ENCODE measurements at regions of chr15 and their contacts with region 1.

Region 1: GRCh38 chr15:78761891-78762385 is 49.3 kb downstream of the ADAMTS7 start:
- DNase-seq: no peak
- H3K4me3 Mint-ChIP-seq: no peak overlapping the region
- H3K27ac Mint-ChIP-seq: peak overlapping the region; percentile 86
- H3K4me1 Mint-ChIP-seq: peaks cover 22% of the 10 kb centered on the region
- H3K27me3 Mint-ChIP-seq: no peaks in the 10 kb centered on the region

Region 2: DNA sequence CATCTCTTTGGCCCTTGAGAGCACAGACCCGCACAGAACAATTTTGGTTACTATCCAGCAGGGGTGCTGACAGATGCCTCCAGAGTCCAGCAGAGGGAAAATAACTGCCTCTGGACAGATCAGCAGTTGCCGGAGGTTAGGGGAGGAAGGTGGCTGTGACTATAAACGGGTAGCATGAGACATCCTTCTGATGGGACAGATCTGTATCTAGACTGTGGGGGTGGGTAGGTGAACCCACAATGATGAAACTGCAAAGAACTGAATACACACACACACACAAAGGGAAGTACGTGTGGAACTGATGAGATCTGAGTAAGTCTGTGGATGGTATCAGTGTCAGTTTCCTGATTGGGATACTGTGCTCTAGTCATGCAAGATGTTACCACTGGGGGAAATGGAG is 28.1 kb after region 1 on chr15:
- intact Hi-C with region 1: loop called (anchors 1 kb)
- DNase-seq: peak; percentile 37
- H3K4me3 Mint-ChIP-seq: no peak overlapping the region
- H3K27ac Mint-ChIP-seq: peak overlapping the region; percentile 44
- H3K4me1 Mint-ChIP-seq: peaks cover 23% of the 10 kb centered on the region
- H3K27me3 Mint-ChIP-seq: no peaks in the 10 kb centered on the region

Region 3: DNA sequence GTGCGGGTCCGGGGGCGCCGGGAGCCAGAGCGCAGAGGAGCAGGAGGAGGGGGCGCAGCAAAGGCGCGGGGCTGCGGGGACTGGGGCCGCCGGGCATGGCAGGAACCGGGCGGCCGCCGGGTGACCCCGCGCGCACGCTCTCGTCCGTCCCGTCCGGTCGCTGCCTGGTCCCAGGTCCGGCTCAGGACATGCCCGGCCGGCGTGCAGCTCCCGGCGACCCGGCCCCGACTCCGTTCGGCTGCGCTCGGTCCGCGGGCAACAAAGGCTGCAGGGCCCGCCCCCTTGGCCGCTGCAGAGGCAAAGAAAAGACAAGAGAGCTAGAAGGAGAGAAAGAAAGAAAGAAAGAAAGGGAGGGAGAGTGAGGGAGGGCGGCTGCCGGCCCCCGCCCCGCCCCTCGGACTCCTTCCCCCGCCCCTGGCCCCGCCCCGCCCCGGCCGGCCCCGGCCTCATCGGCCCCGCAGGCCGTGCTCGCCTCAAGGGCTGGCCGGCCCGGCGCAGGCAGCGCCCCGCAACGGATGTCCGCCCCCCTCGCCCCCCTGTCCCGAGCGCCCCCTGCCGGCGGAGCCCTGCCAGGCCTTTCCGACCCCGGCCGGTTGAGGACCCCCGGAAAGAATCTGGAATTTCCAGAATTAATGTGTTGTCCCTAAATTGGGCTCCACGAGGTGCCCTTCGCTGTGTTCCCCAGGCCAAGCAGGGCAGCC is 49.3 kb after region 1 on chr15 and contains the start of gene ADAMTS7:
- intact Hi-C with region 1: loop called (anchors 2 kb)
- DNase-seq: peak; percentile 25
- H3K4me3 Mint-ChIP-seq: peak within 1 kb of the TSS; percentile 83
- H3K27ac Mint-ChIP-seq: no peak within 1 kb of the TSS
- H3K4me1 Mint-ChIP-seq: peaks cover 7% of the 10 kb centered on the region
- H3K27me3 Mint-ChIP-seq: peaks cover 40% of the 10 kb centered on the region
- total RNA-seq, gene ADAMTS7: 6.9 and 7.2 TPM in 2 replicates